HepG2 (cell line): ENCODE measurements at regions of chr6 and their contacts with region 1.

Region 1: GRCh38 chr6:7107578-7108195 is at the start of gene RREB1:
- DNase-seq: peak; percentile 67
- ATAC-seq: peak; percentile 64
- H3K4me3 ChIP-seq: peak within 1 kb of the TSS; percentile 91 to 98 (median 97)
- H3K27ac ChIP-seq: peak within 1 kb of the TSS; percentile 89
- H3K4me1 ChIP-seq: peaks cover 42% of the 10 kb centered on the region
- H3K27me3 ChIP-seq: no peaks in the 10 kb centered on the region; a peak in 1 of 5 replicates
- CTCF ChIP-seq: no peak
- EP300 ChIP-seq: 0 out of 4 replicates have a peak, but pooled peaks of 1 of the 2 experiments have one; percentile 4
- POLR2A ChIP-seq: peak; percentile 58 to 83
- RAD21 ChIP-seq: no peak
- total RNA-seq, gene RREB1: 23.2 and 23.4 TPM in 2 replicates

Region 2: GRCh38 chr6:6788394-6789020 is 319.2 kb before region 1 on chr6:
- CTCF ChIA-PET with region 1: no interaction called
- POLR2A ChIA-PET with region 1: no interaction called
- in situ Hi-C with region 1: no loop called
- intact Hi-C with region 1: loop called (anchors 1 kb)
- DNase-seq: no peak
- ATAC-seq: peak; percentile 74
- H3K4me3 ChIP-seq: no peak overlapping the region
- H3K27ac ChIP-seq: no peak overlapping the region
- H3K4me1 ChIP-seq: no peaks in the 10 kb centered on the region
- H3K27me3 ChIP-seq: peaks cover 0 to 2% of the 10 kb centered on the region in 2 experiments; a peak in 2 of 5 replicates
- CTCF ChIP-seq: peak; percentile 55
- EP300 ChIP-seq: no peak
- POLR2A ChIP-seq: no peak
- RAD21 ChIP-seq: 0 out of 2 replicates have a peak, but pooled peaks have one; percentile 14

Region 3: GRCh38 chr6:7140631-7141378 is 33.1 kb after region 1 on chr6:
- CTCF ChIA-PET with region 1: no interaction called
- POLR2A ChIA-PET with region 1: interaction called, 18 read pairs
- in situ Hi-C with region 1: no loop called
- intact Hi-C with region 1: loop called (anchors 1 kb)
- DNase-seq: peak; percentile 67
- ATAC-seq: peak; percentile 87
- H3K4me3 ChIP-seq: peak overlapping the region; percentile 31 to 70 (median 48); a peak in 5 of 6 replicates
- H3K27ac ChIP-seq: peak overlapping the region; percentile 97
- H3K4me1 ChIP-seq: peaks cover 98% of the 10 kb centered on the region
- H3K27me3 ChIP-seq: no peaks in the 10 kb centered on the region
- CTCF ChIP-seq: 0 out of 2 replicates have a peak, but pooled peaks have one; percentile 19
- EP300 ChIP-seq: no peak
- POLR2A ChIP-seq: peak; percentile 93
- RAD21 ChIP-seq: peak; percentile 73

Region 4: GRCh38 chr6:7159790-7160525 is 52.3 kb after region 1 on chr6:
- CTCF ChIA-PET with region 1: no interaction called
- POLR2A ChIA-PET with region 1: interaction called, 13 read pairs
- in situ Hi-C with region 1: no loop called
- intact Hi-C with region 1: loop called (anchors 2 kb)
- DNase-seq: peak; percentile 38
- ATAC-seq: peak; percentile 18
- H3K4me3 ChIP-seq: no peak overlapping the region
- H3K27ac ChIP-seq: peak overlapping the region; percentile 88
- H3K4me1 ChIP-seq: peaks cover 100% of the 10 kb centered on the region
- H3K27me3 ChIP-seq: no peaks in the 10 kb centered on the region
- CTCF ChIP-seq: no peak
- EP300 ChIP-seq: no peak
- POLR2A ChIP-seq: no peak
- RAD21 ChIP-seq: no peak